Activated CD8-positive, alpha-beta T cell treated with anti-CD3 and anti-CD28 coated beads for 36 hours (primary cell): ENCODE measurements at regions of chr6 and their contacts with region 1.

Region 1: DNA sequence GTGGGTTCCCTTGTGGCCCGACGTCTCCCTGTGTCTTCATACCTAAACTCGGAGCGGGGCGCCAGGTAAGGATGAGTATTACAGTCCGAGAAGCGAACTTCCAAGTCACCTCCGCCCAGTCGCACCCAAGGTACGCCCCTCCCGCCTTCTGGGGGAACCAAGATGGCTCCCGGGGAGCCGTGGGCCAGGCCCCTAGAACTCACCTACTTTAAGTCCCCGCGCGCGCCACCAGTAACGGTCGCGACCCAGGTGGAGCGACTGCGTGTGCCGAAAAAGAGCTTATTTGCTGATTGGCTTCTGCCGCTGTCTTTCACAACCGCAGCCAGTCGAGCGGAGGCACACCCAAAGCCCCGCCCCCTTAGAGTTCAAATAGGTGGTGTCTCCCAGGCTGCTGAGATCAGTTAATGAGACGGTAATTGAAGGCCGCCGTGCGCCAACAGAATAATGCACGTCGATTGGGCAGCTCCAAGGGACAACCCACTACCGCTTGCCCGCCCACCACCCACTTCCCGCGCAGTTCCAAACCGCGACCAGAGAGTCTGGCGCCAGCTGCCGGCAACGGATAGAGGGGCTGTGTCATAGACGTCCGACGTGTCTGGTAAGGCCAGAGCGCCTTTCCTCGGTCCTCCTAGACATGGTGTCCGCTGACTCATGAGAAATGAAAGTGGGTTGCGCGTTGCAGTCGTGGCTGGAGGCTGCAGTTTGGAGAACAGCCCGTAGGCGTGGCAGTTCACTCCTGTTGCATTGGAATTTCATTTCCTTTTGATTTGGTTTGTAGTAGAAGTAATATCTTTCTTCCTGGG is at the start of gene MDC1:
- DNase-seq: peak; percentile 100
- ATAC-seq: peak; percentile 78
- H3K4me3 Mint-ChIP-seq: peak within 1 kb of the TSS; percentile 80
- H3K27ac Mint-ChIP-seq: peak within 1 kb of the TSS; percentile 99
- H3K4me1 Mint-ChIP-seq: peaks cover 37% of the 10 kb centered on the region
- H3K27me3 Mint-ChIP-seq: no peaks in the 10 kb centered on the region
- CTCF ChIP-seq: no peak
- total RNA-seq, gene MDC1: 80.4 to 90.7 TPM

Region 2: DNA sequence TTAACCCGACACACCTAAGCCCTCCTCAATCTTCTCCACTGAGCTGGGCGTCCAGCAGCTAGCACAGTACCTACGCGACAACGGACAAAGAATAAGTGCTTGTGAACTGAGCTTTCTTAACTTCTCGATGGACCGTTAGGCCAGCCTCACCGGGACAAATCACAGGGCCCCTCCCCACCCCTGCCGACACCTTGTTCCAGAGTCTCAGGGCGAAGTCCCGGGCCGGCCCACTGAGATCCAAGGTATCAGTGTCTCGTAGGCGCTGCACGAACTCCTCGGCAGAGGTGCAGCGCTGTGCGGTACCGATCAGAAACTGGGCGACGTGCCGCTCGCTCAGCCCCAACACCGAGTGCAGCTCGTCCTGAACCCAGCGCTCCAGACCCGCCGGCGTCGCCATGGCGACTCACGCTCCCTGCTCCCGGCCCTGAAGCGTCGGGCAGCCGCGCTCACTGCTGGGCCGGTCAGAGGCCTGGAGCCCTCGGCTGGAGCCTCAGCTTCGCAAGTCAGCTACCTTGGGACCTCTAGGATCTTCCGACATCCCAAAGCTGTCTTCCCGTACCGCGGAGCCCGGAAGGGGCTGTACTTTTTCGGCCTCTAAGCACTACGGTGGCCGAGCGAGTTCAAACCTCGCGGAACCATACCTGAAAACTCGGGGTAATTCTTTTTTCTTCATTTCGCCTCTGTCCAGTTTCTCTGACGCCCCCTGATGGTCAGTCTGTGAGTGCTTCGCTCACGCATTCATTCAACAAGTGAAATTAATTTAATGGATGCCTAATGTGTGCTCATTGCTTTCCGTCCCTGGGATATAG is 44.6 kb before region 1 on chr6 and contains the start of gene DHX16:
- CTCF ChIA-PET with region 1: interaction called, 704 read pairs
- POLR2A ChIA-PET with region 1: interaction called, 500 read pairs
- intact Hi-C with region 1: no loop called
- DNase-seq: peak; percentile 95
- ATAC-seq: peak; percentile 83
- H3K4me3 Mint-ChIP-seq: peak within 1 kb of the TSS; percentile 74
- H3K27ac Mint-ChIP-seq: peak within 1 kb of the TSS; percentile 85
- H3K4me1 Mint-ChIP-seq: peaks cover 26% of the 10 kb centered on the region
- H3K27me3 Mint-ChIP-seq: no peaks in the 10 kb centered on the region
- CTCF ChIP-seq: peak; percentile 70
- total RNA-seq, gene DHX16: 31.1 to 31.3 TPM

Region 3: GRCh38 chr6:30678964-30679726 is 38.1 kb before region 1 on chr6:
- CTCF ChIA-PET with region 1: interaction called, 704 read pairs
- POLR2A ChIA-PET with region 1: interaction called, 500 read pairs
- intact Hi-C with region 1: loop called (anchors 1 kb)
- DNase-seq: peak; percentile 92
- ATAC-seq: peak; percentile 27
- H3K4me3 Mint-ChIP-seq: peak overlapping the region; percentile 88
- H3K27ac Mint-ChIP-seq: peak overlapping the region; percentile 95
- H3K4me1 Mint-ChIP-seq: peaks cover 11% of the 10 kb centered on the region
- H3K27me3 Mint-ChIP-seq: no peaks in the 10 kb centered on the region
- CTCF ChIP-seq: peak; percentile 97

Region 4: DNA sequence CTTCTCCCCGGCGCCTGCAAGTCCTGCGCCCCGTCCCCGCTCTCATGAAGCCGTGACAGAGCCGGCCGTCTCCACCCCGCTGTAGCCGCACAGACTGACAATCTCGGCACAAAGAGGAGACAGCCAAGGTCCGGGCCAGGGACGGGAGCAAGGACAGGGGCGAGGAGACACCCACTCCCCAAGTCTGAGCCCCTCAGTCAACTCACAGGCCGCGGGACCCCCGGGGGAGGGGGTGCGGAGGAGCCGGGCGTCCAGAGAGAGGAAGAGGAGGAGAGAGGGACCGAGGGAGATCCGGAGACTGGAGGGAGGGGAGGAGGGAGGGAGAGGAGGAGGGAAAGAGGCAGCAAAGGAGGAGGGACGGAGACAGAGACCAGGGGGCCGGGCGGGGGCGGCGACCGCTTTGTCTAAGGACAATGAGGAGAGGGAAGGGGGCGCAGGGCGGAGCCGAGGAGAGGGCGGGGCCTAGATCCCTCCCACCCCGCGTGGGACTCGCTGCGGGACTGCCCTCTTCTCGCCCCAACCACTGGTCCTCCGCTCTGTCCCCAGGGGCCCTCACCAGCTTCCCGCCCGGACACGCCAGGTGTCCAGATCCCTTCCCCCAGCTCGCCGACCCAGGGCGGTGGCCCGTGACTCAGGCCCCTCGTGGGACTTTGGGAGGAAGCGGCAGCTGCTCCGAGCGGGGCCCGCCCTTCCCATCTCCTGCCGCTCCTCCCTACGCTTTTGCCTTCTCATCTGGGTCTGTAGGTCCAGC is 30.2 kb before region 1 on chr6:
- CTCF ChIA-PET with region 1: interaction called, 704 read pairs
- POLR2A ChIA-PET with region 1: interaction called, 500 read pairs
- intact Hi-C with region 1: loop called (anchors 1 kb)
- DNase-seq: peak; percentile 88
- ATAC-seq: peak; percentile 21
- H3K4me3 Mint-ChIP-seq: peak overlapping the region; percentile 88
- H3K27ac Mint-ChIP-seq: peak overlapping the region; percentile 88
- H3K4me1 Mint-ChIP-seq: peaks cover 36% of the 10 kb centered on the region
- H3K27me3 Mint-ChIP-seq: no peaks in the 10 kb centered on the region
- CTCF ChIP-seq: no peak

Region 5: GRCh38 chr6:30742316-30743098 is 25.3 kb after region 1 on chr6 and contains the start of gene FLOT1:
- CTCF ChIA-PET with region 1: interaction called, 54 read pairs
- POLR2A ChIA-PET with region 1: interaction called, 136 read pairs
- intact Hi-C with region 1: no loop called
- DNase-seq: peak; percentile 99
- ATAC-seq: peak; percentile 77
- H3K4me3 Mint-ChIP-seq: peak within 1 kb of the TSS; percentile 99
- H3K27ac Mint-ChIP-seq: peak within 1 kb of the TSS; percentile 94
- H3K4me1 Mint-ChIP-seq: peaks cover 67% of the 10 kb centered on the region
- H3K27me3 Mint-ChIP-seq: no peaks in the 10 kb centered on the region
- CTCF ChIP-seq: no peak
- total RNA-seq, gene FLOT1: 135 TPM

Region 6: DNA sequence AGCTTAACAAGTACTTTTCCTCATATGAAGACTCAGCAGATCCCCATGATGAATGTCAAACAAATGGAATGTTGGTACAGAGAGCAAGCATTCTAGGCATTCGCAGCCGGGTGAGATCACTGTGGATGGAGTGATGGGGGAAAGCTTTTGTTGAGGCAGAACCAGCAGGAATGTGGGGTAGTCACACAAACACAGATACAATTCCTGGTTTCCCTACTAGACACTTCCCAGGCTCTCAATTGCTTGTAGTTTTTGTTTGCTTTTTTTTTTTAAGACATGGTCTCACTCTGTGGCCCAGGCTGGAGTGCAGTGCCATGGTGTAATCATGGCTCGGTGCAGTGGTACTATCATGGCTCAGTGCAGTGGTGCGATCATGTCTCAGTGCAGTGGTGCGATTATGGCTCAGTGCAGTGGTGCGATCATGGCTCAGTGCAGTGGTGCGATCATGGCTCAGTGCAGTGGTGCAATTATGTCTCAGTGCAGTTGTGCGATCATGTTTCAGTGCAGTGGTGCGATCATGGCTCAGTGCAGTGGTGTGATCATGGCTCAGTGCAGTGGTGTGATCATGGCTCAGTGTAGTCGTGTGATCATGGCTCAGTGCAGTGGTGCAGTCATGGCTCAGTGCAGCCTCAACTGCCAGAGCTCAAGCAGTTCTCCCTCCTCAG is 42.5 kb after region 1 on chr6:
- CTCF ChIA-PET with region 1: no interaction called
- POLR2A ChIA-PET with region 1: no interaction called
- intact Hi-C with region 1: no loop called
- DNase-seq: no peak
- ATAC-seq: no peak
- H3K4me3 Mint-ChIP-seq: no peak overlapping the region
- H3K27ac Mint-ChIP-seq: no peak overlapping the region
- H3K4me1 Mint-ChIP-seq: peaks cover 45% of the 10 kb centered on the region
- H3K27me3 Mint-ChIP-seq: no peaks in the 10 kb centered on the region
- CTCF ChIP-seq: no peak

Region 7: DNA sequence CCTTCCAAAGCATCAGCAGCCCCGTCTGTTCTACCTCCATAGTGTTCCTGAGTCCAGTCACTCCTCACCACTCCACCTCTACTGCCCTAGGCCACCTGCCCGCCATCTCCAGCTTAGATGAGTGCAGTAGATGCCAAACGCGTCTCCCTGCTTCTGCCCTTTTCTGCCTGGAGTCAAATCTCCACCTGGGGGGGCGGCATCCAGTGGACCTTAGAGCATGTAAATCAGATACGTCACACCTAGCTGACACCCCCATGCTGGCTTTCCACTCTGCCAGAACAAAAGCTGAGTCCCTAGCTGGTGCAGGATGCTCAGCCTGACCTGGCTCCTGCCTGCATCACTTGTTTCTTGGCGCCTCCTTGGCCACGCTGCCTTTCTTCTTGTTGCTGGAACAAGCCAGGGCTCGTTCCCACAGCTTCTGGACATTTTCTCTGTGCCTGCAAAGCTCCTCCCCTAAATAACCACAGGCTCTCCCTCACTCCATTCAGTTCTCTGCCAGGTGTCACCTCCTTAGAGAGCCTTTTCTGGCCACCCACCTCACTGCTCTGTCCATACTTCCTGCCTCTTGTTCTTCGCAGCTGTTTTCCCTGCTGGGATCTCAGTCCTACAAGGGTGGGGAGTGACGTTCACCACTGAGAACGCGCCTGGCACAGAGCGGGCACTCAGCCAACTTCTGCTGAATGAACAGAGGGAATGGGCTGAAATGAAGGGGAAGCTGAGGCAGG is 172.8 kb after region 1 on chr6:
- CTCF ChIA-PET with region 1: no interaction called
- POLR2A ChIA-PET with region 1: no interaction called
- intact Hi-C with region 1: no loop called
- DNase-seq: no peak
- ATAC-seq: no peak
- H3K4me3 Mint-ChIP-seq: no peak overlapping the region
- H3K27ac Mint-ChIP-seq: no peak overlapping the region
- H3K4me1 Mint-ChIP-seq: peaks cover 14% of the 10 kb centered on the region
- H3K27me3 Mint-ChIP-seq: no peaks in the 10 kb centered on the region
- CTCF ChIP-seq: no peak